ENCODE measurements at regions of chr3 and their contacts with region 1.

Region 1: GRCh38 chr3:128051837-128052594 is at the start of gene SEC61A1:
- DNase-seq: peak; percentile 99
- H3K4me3 Mint-ChIP-seq: peak within 1 kb of the TSS; percentile 95
- H3K27ac Mint-ChIP-seq: peak within 1 kb of the TSS; percentile 96
- H3K4me1 Mint-ChIP-seq: peaks cover 33% of the 10 kb centered on the region
- H3K27me3 Mint-ChIP-seq: peaks cover 9% of the 10 kb centered on the region
- total RNA-seq, gene SEC61A1: 194 TPM in 2 replicates

Region 2: GRCh38 chr3:126982471-126983175 is 1069.4 kb before region 1 on chr3 and contains the start of gene PLXNA1:
- intact Hi-C with region 1: loop called (anchors 5 kb)
- DNase-seq: peak; percentile 97
- H3K4me3 Mint-ChIP-seq: peak within 1 kb of the TSS; percentile 89
- H3K27ac Mint-ChIP-seq: peak within 1 kb of the TSS; percentile 92
- H3K4me1 Mint-ChIP-seq: peaks cover 22% of the 10 kb centered on the region
- H3K27me3 Mint-ChIP-seq: peaks cover 9% of the 10 kb centered on the region
- total RNA-seq, gene PLXNA1: 21.3 and 24.0 TPM in 2 replicates

Region 3: GRCh38 chr3:127652231-127652995 is 399.6 kb before region 1 on chr3:
- intact Hi-C with region 1: no loop called
- DNase-seq: peak; percentile 76
- H3K4me3 Mint-ChIP-seq: no peak overlapping the region
- H3K27ac Mint-ChIP-seq: no peak overlapping the region
- H3K4me1 Mint-ChIP-seq: no peaks in the 10 kb centered on the region
- H3K27me3 Mint-ChIP-seq: peaks cover 6% of the 10 kb centered on the region

Region 4: GRCh38 chr3:127672516-127673190 is 379.4 kb before region 1 on chr3 and contains the start of gene ABTB1:
- intact Hi-C with region 1: loop called (anchors 2 kb)
- DNase-seq: peak; percentile 96
- H3K4me3 Mint-ChIP-seq: peak within 1 kb of the TSS; percentile 92
- H3K27ac Mint-ChIP-seq: peak within 1 kb of the TSS; percentile 96
- H3K4me1 Mint-ChIP-seq: peaks cover 18% of the 10 kb centered on the region
- H3K27me3 Mint-ChIP-seq: no peaks in the 10 kb centered on the region
- total RNA-seq, gene ABTB1: 6.9 and 8.0 TPM in 2 replicates

Region 5: DNA sequence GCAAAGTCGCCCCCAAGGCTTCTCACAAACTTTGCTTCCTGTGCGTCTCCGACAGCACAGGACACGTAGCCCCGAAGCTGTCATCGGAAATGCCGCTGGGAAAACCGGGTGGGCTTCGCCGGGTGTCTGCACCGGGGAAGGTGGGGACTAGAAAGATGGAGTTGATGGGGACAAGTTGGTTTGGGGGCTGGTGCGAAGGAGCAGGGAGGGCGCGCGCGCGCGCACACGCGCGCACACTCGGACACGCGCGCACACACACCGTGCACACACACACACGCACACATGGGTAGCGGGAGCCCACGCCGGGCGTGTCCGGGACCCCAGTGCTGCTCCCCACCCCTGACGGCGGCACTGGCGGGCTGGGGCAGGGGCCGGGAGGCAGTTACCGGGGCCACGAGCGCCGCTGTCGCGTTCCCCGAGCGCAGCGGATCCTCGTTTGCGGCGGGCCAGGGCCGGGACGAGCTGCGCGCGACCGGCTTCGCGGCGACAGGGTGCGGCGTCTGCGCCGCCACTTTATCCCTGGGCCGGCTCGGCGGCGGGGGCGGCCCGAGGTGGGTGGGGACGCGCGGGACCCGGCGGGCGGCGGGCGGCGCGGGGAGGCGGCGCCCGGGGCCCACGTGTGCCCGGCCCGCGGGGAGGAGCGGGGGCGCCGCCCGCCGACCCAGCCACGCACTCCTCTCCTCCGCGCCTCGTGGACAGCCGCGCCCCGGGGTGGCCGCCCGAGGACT is 229.2 kb before region 1 on chr3:
- intact Hi-C with region 1: no loop called
- DNase-seq: peak; percentile 69
- H3K4me3 Mint-ChIP-seq: peak overlapping the region; percentile 88
- H3K27ac Mint-ChIP-seq: peak overlapping the region; percentile 78
- H3K4me1 Mint-ChIP-seq: peaks cover 12% of the 10 kb centered on the region
- H3K27me3 Mint-ChIP-seq: peaks cover 55% of the 10 kb centered on the region

Region 6: DNA sequence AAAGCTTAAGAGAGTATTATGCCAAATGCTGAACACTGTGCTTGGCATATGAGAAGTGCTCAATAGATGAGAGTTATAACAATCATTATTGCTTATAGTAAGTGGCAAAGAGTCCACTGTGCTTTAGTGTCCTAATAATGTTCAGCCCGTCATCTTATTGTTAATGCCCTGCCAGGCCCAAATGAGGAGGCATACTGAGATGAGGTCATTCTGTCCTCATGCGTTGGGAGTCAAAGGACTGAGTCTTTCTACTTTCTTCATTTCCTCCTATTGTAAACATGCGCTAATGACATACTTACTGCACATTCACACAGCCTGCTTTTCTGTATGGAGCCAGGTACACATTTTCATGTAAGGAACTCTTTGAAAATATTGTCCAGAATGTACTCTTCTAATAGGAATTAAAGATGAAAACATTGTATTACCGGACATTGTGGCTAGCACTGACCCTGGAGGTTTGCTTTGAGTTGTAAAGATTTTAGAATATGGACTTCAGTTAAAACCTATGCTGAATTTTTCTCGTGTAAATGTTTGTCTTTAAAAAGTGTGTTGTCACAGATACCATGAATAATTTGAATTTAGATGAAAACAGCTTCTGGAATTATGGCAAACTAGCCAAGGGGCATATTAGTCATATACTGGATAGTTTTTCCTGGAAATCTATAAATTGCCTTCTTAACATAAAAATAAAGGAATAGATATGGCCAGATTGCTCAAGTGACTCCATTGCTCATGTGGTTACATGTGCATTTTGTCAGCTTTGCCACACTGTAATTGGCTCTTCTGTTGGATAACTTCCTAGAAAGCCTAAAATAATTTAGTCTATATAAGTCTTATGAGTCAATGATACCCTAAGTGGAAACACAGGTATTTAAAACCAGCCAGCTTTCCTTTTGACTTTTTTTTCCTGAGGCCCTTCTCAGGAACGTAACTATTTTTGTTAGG is 98.7 kb before region 1 on chr3:
- intact Hi-C with region 1: no loop called
- DNase-seq: no peak
- H3K4me3 Mint-ChIP-seq: no peak overlapping the region
- H3K27ac Mint-ChIP-seq: no peak overlapping the region
- H3K4me1 Mint-ChIP-seq: no peaks in the 10 kb centered on the region
- H3K27me3 Mint-ChIP-seq: peaks cover 25% of the 10 kb centered on the region

Region 7: GRCh38 chr3:128123538-128124368 is 71.7 kb after region 1 on chr3 and contains the start of gene RUVBL1:
- intact Hi-C with region 1: loop called (anchors 2 kb)
- DNase-seq: peak; percentile 99
- H3K4me3 Mint-ChIP-seq: peak within 1 kb of the TSS; percentile 99
- H3K27ac Mint-ChIP-seq: peak within 1 kb of the TSS; percentile 97
- H3K4me1 Mint-ChIP-seq: peaks cover 21% of the 10 kb centered on the region
- H3K27me3 Mint-ChIP-seq: peaks cover under 1% of the 10 kb centered on the region
- total RNA-seq, gene RUVBL1: 149 and 150 TPM in 2 replicates

Region 8: DNA sequence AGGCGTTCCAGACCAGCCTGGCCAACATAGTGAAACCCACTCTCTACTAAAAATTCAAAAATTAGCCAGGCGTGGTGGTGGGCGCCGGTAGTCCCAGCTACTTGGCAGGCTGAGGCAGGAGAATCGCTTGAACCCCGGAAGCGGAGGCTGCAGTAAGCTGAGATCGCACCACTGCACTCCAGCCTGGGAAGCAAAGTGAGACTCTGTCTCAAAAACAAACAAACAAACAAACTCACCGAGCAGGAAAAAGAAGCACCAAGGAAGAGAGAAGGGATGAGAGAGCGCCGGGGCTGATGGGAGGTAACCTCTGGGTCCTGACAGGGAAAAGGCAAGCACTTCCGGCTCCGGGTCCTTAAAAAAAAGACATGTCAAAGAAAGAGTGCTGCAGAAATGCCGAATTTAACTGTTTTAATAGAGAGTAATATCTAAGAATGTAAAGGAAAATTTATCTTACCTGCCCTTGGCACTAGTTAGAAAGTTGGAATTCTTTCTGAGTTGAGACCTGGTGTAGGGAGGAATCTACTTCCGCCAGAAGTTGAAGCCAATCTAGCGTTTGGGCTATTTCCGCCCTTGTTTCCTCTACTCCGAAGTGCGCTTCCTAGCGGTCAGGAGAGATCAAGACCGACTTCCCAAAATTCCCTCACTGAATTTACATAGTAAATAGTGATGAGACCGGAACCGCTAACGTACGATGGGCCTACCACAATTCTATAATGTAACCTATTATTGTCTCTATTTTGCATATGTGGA is 1347.3 kb after region 1 on chr3:
- intact Hi-C with region 1: loop called (anchors 2 kb)
- DNase-seq: peak; percentile 93
- H3K4me3 Mint-ChIP-seq: peak overlapping the region; percentile 91
- H3K27ac Mint-ChIP-seq: peak overlapping the region; percentile 92
- H3K4me1 Mint-ChIP-seq: peaks cover 31% of the 10 kb centered on the region
- H3K27me3 Mint-ChIP-seq: no peaks in the 10 kb centered on the region

Measured in activated CD4-positive, alpha-beta T cell treated with anti-CD3 and anti-CD28 coated beads, Interleukin-2, amount 10 ng/mL, durations not matched to agents 24 days and 14 days (primary cell).